BJ (cell line): ENCODE measurements at regions of chr5 and their contacts with region 1.

Region 1: DNA sequence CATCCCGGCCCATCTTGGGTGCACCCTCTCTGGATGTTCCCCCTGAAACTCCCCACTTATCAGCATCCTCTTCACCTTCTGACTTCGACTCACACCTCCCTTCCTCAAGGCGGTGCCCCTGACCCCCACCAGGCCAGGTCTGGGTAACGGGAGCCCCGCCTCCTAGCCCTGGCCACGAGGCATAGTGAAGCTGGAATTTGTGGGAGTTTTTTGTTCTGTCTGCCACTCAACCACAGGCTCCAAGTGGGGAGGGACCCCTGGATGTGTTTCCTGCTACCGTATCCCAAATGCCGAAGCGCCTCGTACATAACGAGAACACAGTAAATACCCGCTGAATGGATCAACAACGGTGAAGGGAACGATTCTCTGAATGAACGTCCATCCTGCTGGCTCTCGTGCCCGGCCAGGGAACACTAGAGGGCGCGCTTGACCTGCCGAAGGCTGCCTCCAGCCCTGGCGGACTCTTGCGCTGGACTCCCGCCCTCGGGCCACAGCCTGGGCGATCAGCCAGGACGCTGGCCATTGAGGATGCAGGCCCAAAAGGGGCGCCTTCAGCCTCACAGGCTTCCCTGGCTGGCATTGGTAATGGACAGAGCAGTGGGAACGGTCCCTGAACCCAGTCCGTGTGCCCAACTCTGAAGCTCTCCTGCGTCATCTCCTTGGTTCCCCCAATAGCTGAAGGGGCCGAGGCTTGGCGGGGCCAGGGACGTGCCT is 47.3 kb upstream of the PHYKPL start:
- DNase-seq: peak; percentile 4
- H3K4me3 ChIP-seq: no peak overlapping the region
- H3K27me3 ChIP-seq: no peaks in the 10 kb centered on the region; the same call in 1 of the 2 replicates
- CTCF ChIP-seq: peak; percentile 91

Region 2: DNA sequence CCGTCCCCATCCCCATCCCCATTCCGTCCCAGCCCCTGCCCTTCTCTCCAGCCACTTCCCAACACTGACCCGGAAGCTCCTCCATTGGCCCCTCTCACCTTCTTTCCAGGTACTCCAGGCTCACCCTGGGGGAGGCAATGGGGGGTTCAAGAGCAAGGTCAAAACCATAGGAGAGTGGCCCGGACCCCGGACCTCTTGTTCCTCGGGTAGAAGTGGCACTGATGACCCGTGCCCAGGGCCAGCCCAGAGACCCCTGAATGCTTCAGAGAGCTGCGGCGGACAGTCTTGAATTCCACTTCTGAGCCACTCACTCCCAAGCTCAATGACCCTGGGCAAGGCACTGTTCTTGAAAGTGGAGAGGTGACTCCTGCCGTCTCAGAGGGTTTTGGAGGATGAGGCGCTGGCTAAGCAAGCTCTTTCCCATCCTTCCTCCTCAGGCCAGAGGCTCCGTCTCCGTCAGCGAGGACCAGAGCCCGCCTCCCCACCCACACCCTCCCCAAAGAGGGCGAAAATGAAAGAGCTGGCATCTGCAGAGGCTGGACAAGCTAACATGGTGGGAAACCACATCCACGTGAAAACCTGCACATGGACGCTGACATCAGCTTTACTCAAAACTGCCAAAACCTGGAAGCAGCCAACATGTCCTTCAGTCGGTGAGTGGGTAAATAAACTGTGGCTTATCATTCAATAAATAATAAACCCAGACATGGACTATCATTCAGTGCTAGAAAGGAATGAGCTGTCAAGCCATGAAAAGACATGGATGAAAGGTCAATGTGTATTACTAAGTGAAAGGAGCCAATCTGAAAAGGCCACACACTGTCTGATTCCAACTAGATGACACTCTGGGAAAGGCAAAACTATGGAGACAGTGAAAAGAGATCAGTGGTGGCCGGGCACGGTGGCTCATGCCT is 20.0 kb before region 1 on chr5:
- CTCF ChIA-PET with region 1: no interaction called
- POLR2A ChIA-PET with region 1: no interaction called
- DNase-seq: no peak
- H3K4me3 ChIP-seq: no peak overlapping the region
- H3K27me3 ChIP-seq: no peaks in the 10 kb centered on the region
- CTCF ChIP-seq: no peak

Region 3: DNA sequence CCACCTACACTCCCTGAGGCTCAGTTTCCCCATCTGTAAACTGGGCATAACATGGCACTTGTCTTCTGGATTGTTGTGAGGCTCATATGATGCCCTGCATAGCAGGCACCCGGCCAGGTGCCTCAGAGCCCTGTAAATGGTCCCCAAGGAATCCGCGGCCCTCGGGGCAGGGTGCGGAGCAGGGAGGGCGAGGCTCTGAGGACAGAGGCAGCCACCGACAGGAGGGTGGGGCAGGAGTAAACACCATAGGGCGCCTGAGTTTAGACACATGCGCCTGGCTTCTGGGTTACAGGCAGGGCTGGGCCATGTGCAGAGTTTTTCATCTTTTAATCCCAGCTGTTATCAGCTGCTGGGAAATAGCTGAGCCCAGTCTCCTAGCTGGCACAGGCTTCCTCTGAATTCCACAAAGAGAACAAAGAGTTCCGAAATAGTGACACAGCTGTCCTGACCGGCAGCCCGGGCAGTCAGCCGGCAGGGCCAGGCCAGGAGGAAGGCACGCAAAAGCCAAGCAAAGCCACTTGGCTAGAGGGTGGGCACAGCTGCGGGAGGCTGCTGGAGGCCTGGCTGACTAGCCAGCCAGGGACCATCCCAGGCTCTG is 51.6 kb after region 1 on chr5:
- CTCF ChIA-PET with region 1: no interaction called
- POLR2A ChIA-PET with region 1: no interaction called
- DNase-seq: no peak
- H3K4me3 ChIP-seq: no peak overlapping the region
- H3K27me3 ChIP-seq: no peaks in the 10 kb centered on the region
- CTCF ChIP-seq: no peak

Region 4: GRCh38 chr5:178551468-178551867 is 271.6 kb after region 1 on chr5:
- CTCF ChIA-PET with region 1: interaction called, 14 read pairs
- POLR2A ChIA-PET with region 1: no interaction called
- DNase-seq: no peak
- H3K4me3 ChIP-seq: no peak overlapping the region
- H3K27me3 ChIP-seq: no peaks in the 10 kb centered on the region
- CTCF ChIP-seq: no peak